ENCODE measurements at regions of chr5 and their contacts with region 1.

Region 1: GRCh38 chr5:10590226-10590999 is 26.5 kb downstream of the ANKRD33B start:
- DNase-seq: peak in 2 of 3 donors; percentile 45 to 53
- H3K4me3 ChIP-seq: peak overlapping the region in 3 of 7 experiments; percentile 12 to 51 (median 33)
- H3K27ac ChIP-seq: peak overlapping the region in 1 of 2 experiments; percentile 82
- H3K4me1 ChIP-seq: peaks cover 7 to 59% (median 49%) of the 10 kb centered on the region in 4 experiments
- H3K27me3 ChIP-seq: no peaks in the 10 kb centered on the region

Region 2: DNA sequence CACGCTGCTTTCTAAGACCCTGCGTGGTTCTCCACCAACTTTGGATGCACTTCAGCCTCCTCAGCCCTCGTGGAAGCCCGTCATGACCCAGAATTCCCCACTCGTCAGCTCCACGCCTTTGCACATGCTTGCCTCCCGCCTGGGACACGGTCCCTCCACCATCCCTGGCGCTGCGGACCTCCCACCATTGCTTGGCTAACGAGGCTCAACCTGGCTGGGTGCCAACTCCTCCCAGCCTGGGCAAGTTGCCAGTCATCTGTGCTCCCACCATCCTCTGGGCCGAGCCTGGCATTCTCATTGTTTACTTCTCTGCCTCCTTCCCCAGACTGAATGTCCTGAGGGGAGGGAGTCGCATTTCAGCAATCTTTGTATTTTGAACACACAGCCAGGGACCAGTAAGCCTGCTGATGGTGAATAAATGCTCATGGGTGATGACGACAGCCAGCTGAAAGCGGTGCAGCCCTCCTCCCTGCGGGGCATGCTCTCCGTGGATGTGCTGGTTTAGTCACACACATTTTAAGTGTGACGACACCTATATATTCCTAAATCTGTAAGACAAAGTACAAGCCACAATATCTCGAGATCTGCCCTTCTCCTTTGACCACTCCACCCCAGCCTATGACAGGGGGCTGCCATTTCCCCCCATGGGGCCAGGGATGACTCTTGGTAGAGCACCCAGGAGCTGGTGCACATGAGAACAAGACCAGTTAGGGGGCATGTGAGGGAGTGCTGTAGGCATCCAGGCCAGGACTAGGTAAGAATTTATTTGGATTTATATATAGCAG is 11.0 kb after region 1 on chr5:
- CTCF ChIA-PET with region 1: interaction called, 12 read pairs
- POLR2A ChIA-PET with region 1: interaction called, 10 read pairs
- DNase-seq: peak in 1 of 3 donors; percentile 39
- H3K4me3 ChIP-seq: peak overlapping the region in 2 of 7 experiments; percentile 2 to 7
- H3K27ac ChIP-seq: peak overlapping the region in 1 of 2 experiments; percentile 56
- H3K4me1 ChIP-seq: peaks cover 0 to 23% (median 17%) of the 10 kb centered on the region in 4 experiments
- H3K27me3 ChIP-seq: no peaks in the 10 kb centered on the region

Region 3: GRCh38 chr5:10607666-10608073 is 17.3 kb after region 1 on chr5:
- CTCF ChIA-PET with region 1: interaction called, 15 read pairs
- POLR2A ChIA-PET with region 1: interaction called, 10 read pairs
- DNase-seq: peak; percentile 86 to 94 (median 88)
- H3K4me3 ChIP-seq: peak overlapping the region in 6 of 7 experiments; percentile 35 to 66 (median 38)
- H3K27ac ChIP-seq: peak overlapping the region; percentile 77 to 84
- H3K4me1 ChIP-seq: peaks cover 9 to 49% (median 28%) of the 10 kb centered on the region in 4 experiments
- H3K27me3 ChIP-seq: no peaks in the 10 kb centered on the region

Region 4: GRCh38 chr5:10789021-10789420 is 198.6 kb after region 1 on chr5:
- CTCF ChIA-PET with region 1: no interaction called
- POLR2A ChIA-PET with region 1: no interaction called
- DNase-seq: no peak
- H3K4me3 ChIP-seq: no peak overlapping the region
- H3K27ac ChIP-seq: no peak overlapping the region
- H3K4me1 ChIP-seq: peaks cover 0 to 6% (median 0%) of the 10 kb centered on the region in 4 experiments
- H3K27me3 ChIP-seq: no peaks in the 10 kb centered on the region

Measured in common myeloid progenitor, CD34-positive (primary cell).